ENCODE measurements at regions of chr3 and their contacts with region 1.

Region 1: DNA sequence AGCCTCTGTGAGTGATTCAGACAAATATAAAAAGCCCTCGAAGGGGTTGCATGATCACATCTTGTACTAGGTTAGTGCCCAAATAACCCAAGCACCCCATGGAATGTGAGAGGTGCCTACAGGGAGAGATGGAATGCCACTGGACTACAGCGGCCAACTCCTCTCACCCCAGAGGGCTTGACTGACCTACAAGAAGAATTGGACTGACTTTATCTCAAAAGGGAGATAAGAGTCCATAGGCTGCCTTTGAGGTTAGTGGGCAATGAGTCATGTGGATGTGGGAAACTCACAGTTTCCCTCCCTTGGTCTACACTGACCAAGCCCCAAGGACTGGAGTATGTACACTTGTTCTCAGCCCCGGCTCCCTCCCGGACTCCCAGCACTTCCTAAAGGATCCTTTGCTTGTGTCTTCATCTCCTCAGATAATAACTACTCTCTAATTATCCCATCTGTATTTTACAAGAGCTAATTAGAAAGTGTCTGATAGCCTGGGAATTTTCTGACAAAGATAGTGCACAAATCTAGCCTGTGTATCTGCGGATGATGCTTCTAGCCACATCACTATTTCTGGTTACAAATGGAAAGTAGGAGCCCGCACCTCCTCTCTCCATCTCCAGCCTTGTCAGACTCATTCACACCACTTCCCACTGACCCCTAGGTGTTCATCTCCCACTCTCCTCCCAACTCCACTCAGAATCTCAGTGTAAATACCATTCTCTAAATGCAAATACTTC is 547.8 kb upstream of the TBL1XR1 start:
- DNase-seq: no peak
- H3K4me3 ChIP-seq: no peak overlapping the region
- H3K27ac ChIP-seq: no peak overlapping the region
- H3K4me1 ChIP-seq: no peaks in the 10 kb centered on the region
- H3K27me3 ChIP-seq: no peaks in the 10 kb centered on the region
- CTCF ChIP-seq: no peak
- POLR2A ChIP-seq: no peak

Region 2: DNA sequence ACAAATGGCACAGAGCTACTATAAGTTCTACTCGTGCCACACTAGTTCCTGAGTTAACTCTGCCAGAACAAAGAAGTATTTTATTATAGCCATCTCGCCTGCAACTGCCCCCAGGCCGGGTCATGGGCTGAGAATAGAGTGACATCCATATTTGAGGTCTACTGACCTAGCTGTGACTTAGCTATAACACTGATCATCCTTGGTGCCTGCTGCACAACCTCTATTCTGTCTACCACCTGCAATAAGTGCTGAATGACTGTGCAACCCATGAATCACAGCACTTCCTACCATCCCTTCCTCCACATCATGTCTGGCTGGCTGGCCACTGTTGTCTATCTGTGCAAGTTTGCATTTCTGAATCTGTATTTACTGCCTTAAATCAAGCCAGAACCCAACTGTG is 41.3 kb before region 1 on chr3:
- CTCF ChIA-PET with region 1: no interaction called
- POLR2A ChIA-PET with region 1: no interaction called
- dilution Hi-C with region 1: no loop called
- intact Hi-C with region 1: loop called (anchors 1 kb)
- DNase-seq: peak; percentile 15
- H3K4me3 ChIP-seq: no peak overlapping the region
- H3K27ac ChIP-seq: no peak overlapping the region
- H3K4me1 ChIP-seq: peaks cover 4% of the 10 kb centered on the region
- H3K27me3 ChIP-seq: no peaks in the 10 kb centered on the region
- CTCF ChIP-seq: no peak
- POLR2A ChIP-seq: no peak

Region 3: DNA sequence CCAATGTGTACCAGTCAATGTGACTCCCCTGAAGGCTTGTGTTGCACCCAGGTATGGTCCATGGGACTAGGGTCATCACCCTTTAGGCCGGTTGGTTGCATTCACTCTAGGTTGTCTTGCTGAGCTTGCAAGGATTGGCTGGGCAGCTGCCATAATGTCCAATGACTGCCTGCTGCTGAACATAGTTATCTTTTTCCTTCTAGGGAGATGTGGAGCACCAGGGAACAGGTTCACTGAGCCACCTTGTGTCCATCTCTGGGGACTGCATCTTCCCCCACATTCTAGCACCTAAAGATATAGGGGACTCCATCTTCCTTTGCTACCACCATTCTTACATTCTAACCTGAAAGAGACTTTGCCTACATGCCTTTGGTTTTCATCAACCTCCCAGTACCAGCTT is 32.7 kb after region 1 on chr3:
- CTCF ChIA-PET with region 1: no interaction called
- POLR2A ChIA-PET with region 1: no interaction called
- dilution Hi-C with region 1: no loop called
- intact Hi-C with region 1: no loop called
- DNase-seq: peak; percentile 41
- H3K4me3 ChIP-seq: no peak overlapping the region
- H3K27ac ChIP-seq: no peak overlapping the region
- H3K4me1 ChIP-seq: peaks cover 13% of the 10 kb centered on the region
- H3K27me3 ChIP-seq: no peaks in the 10 kb centered on the region
- CTCF ChIP-seq: peak; percentile 52 to 57
- POLR2A ChIP-seq: no peak